Natural killer cell (primary cell): ENCODE measurements at regions of chr10 and their contacts with region 1.

Region 1: DNA sequence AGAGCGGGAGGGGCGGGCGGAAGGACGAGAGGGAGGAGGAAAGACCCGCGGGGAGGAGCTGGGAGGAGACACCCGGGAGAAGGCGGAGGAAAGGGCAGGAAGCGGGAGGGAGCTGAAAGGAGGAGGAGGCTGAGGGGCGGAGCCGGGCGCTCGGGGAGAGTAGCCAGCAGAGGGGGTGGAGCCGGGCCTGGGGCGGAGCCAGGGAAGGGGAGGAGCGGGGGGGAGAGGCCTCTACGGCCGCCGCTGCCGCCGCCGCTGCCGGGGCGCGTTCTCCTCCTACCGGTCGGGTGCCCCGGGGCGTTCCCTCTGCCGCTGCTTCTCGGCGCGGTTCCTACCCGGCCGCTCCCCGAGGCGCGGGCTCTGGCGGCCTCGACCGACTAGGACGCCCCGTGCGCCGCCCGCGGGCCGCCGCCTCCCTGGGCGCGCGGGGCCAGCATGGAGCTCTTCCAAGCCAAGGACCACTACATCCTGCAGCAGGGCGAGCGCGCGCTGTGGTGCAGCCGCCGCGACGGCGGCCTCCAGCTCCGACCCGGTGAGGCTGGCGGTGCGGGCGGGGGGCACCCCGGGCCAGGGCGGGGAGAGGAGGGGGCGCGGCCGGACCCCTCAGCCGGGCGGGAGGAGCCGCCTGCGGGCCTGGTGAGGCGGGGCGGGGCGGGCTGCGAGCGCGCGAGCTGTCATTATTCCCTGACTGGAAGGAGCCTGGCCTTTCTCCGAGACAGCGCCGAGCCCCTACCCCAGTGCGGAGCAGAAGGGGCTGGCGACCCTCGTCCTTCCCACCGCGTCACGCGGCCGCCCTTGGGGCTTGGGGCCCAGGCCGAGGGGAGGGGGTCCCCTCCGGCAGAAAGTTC is at the start of gene INPP5F:
- DNase-seq: peak; percentile 91 to 98
- ATAC-seq: peak; percentile 93 to 98 (median 94)
- H3K4me3 ChIP-seq: peak within 1 kb of the TSS; percentile 45
- H3K4me3 Mint-ChIP-seq: peak within 1 kb of the TSS; percentile 92
- H3K27ac ChIP-seq: peak within 1 kb of the TSS; percentile 84
- H3K27ac Mint-ChIP-seq: peak within 1 kb of the TSS; percentile 24 to 80
- H3K4me1 ChIP-seq: peaks cover 18% of the 10 kb centered on the region
- H3K4me1 Mint-ChIP-seq: peaks cover 30 to 34% of the 10 kb centered on the region in 2 donors
- H3K27me3 ChIP-seq: no peaks in the 10 kb centered on the region
- H3K27me3 Mint-ChIP-seq: no peaks in the 10 kb centered on the region
- CTCF ChIP-seq: peak; percentile 17
- total RNA-seq, gene INPP5F: 12.8 to 18.2 (median 15.8) TPM

Region 2: GRCh38 chr10:119650692-119651513 is 75.1 kb before region 1 on chr10 and contains the start of gene BAG3:
- intact Hi-C with region 1: loop called (anchors 5 kb)
- DNase-seq: peak; percentile 70 to 85
- ATAC-seq: peak; percentile 93 to 96 (median 94)
- H3K4me3 ChIP-seq: peak within 1 kb of the TSS; percentile 84
- H3K4me3 Mint-ChIP-seq: peak within 1 kb of the TSS; percentile 92
- H3K27ac ChIP-seq: peak within 1 kb of the TSS; percentile 70
- H3K27ac Mint-ChIP-seq: peak within 1 kb of the TSS; percentile 78 to 88
- H3K4me1 ChIP-seq: peaks cover 3% of the 10 kb centered on the region
- H3K4me1 Mint-ChIP-seq: peaks cover 23 to 27% of the 10 kb centered on the region in 2 donors
- H3K27me3 ChIP-seq: no peaks in the 10 kb centered on the region
- H3K27me3 Mint-ChIP-seq: no peaks in the 10 kb centered on the region
- CTCF ChIP-seq: no peak
- total RNA-seq, gene BAG3: 7.6 to 9.7 (median 8.3) TPM